GM10248 (cell line): ENCODE measurements at regions of chr19 and their contacts with region 1.

Region 1: GRCh38 chr19:29714953-29715700 is at the start of gene C19orf12:
- DNase-seq: peak; percentile 81
- CTCF ChIP-seq: no peak

Region 2: GRCh38 chr19:29622138-29623070 is 92.7 kb before region 1 on chr19:
- CTCF ChIA-PET with region 1: interaction called, 14 read pairs
- POLR2A ChIA-PET with region 1: no interaction called
- DNase-seq: peak; percentile 63
- CTCF ChIP-seq: no peak

Region 3: GRCh38 chr19:29665215-29665825 is 49.8 kb before region 1 on chr19 and contains the start of gene PLEKHF1:
- CTCF ChIA-PET with region 1: interaction called, 49 read pairs
- POLR2A ChIA-PET with region 1: no interaction called
- DNase-seq: peak; percentile 96
- CTCF ChIP-seq: peak; percentile 37

Region 4: DNA sequence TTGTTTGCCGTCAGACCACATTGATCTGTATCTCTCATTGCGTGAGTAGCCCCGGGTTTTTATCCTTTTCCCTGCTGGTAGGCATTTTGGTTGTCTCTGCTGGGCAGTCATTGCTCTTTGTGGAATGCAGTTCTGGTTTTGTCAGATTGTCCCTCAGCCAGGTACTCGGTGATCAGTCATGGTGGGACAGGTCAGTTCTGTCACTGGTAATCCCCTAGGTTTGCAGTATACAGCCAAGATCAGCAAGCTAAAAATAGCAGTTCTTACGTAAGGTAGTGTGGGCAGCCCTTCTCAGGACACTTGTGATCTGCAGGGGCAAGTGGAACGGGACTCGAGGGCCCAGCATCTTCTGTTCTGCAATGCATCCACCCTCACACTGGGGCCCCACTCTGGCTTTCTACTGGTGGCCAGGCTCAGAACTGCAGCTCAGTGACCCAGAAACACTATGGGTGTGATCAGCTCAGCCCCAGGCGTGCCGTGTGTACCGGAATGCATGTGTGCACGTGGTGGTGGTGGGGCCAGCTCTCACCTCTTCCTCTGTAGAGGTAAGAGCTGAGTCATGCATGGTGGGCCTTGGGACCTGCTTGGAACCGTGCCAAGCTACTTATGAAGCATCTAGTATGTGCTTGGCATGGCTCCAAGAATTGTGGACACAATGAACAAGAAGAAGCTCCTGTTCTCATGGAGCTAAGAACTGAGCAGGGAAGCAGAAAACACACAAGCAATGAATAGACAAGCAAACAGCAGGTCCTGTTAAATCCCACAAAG is 43.5 kb before region 1 on chr19:
- CTCF ChIA-PET with region 1: interaction called, 49 read pairs
- POLR2A ChIA-PET with region 1: interaction called, 4 read pairs
- DNase-seq: peak; percentile 76
- CTCF ChIP-seq: peak; percentile 26

Region 5: GRCh38 chr19:29680447-29680846 is 34.7 kb before region 1 on chr19:
- CTCF ChIA-PET with region 1: interaction called, 17 read pairs
- POLR2A ChIA-PET with region 1: no interaction called
- DNase-seq: peak; percentile 63
- CTCF ChIP-seq: no peak

Region 6: DNA sequence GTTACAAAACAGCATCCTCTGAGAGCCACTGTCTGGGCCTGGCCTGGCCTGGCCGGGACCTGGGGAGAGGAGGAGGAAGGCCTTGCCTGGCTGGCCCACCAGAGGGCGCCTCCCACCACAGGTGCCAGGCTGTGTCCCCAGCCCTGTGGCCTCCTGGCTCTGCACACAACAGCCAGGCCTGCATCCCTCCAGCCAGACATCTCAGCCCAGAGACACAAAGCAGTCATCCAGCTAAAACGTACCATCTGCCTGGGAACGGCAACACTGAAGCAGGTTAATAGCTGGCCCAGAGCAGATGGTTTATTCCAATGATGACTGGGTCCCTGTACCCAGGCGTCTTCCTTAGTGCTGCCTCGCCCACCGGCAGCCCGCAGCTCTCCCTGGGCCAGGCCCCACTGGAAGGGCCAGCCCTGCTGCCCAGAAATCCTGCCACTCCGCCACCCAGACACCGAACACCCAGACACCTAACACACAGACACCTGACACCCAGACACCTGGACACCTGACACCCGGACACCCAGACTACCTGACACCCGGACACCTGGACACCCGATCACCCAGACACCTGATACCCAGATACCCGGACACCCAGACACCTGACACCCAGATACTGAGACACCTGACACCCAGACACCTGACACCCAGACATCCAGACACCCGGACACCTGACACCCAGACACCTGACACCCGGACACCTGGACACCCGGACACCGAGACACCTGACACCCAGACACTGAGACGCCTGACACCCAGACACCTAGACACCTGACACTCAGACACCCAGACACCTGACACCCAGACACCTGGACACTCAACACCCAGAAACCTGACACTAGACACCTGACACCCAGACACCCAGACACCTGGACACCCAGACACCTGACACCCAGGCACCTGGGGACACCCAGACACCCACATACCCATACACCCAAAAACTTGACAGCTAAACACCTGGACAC is 20.2 kb before region 1 on chr19:
- CTCF ChIA-PET with region 1: interaction called, 102 read pairs
- POLR2A ChIA-PET with region 1: no interaction called
- DNase-seq: peak; percentile 83
- CTCF ChIP-seq: peak; percentile 93

Region 7: GRCh38 chr19:29704562-29705558 is 10.3 kb before region 1 on chr19:
- CTCF ChIA-PET with region 1: interaction called, 22 read pairs
- POLR2A ChIA-PET with region 1: no interaction called
- DNase-seq: peak; percentile 61
- CTCF ChIP-seq: no peak